ENCODE measurements at regions of chr9 and their contacts with region 1.

Region 1: GRCh38 chr9:27033823-27034403 is 28.4 kb upstream of the LRRC19 start:
- DNase-seq: peak; percentile 59 to 65
- H3K4me3 ChIP-seq: no peak overlapping the region
- H3K27ac ChIP-seq: no peak overlapping the region
- H3K4me1 ChIP-seq: peaks cover 0 to 3% (median 0%) of the 10 kb centered on the region in 4 donors
- H3K27me3 ChIP-seq: no peaks in the 10 kb centered on the region
- CTCF ChIP-seq: peak in 5 of 7 experiments; percentile 46 to 80 (median 73)
- EP300 ChIP-seq: no peak
- POLR2A ChIP-seq: no peak

Region 2: DNA sequence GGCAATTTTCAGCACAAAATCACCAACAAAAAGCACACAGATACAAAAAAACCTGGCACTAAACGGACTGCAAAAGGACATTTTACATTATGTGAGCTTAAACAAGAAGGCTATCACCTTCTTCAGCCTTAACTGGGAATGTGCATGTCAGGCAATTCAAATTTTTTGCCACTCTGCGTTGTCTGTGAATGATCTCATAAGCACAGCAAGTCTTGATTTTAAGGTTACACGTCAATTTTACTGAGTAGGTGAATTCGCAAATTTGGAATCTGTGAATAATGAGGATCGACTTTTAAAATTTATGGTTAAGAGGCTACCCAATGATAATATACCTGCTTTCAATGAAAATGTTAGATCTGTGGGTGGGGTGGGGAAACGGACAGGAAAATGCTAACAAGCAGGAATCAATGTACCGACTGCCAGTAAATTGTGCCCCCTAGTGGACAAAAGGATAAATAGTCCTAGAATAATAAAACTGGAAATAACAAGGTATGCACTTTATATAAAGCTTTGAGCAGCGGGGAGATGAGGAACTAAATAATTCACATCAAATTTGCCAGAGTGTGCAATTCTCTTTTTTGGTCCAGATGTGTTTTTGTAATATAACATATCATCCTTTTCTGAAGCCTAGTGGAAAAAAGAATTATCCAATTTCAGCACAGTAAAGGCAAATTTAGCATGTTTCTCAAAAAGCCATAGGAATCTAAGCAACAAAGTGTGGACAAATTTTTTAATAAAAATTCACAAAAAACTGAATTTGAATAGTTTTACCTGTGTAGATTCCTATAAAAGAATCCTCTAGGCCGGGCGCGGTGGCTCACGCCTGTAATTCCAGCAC is 242.5 kb after region 1 on chr9:
- intact Hi-C with region 1: loop called (anchors 10 kb)
- DNase-seq: peak in 1 of 2 donors; percentile 83
- H3K4me3 ChIP-seq: peak overlapping the region in 1 of 4 donors; percentile 6
- H3K27ac ChIP-seq: no peak overlapping the region
- H3K4me1 ChIP-seq: peaks cover 0 to 18% (median 9%) of the 10 kb centered on the region in 4 donors
- H3K27me3 ChIP-seq: no peaks in the 10 kb centered on the region
- CTCF ChIP-seq: peak in 5 of 7 experiments; percentile 16 to 90 (median 64)
- EP300 ChIP-seq: no peak
- POLR2A ChIP-seq: no peak